ENCODE measurements at regions of chr12 and their contacts with region 1.

Region 1: GRCh38 chr12:56117778-56118687 is at the start of gene ZC3H10:
- DNase-seq: peak; percentile 89
- ATAC-seq: peak; percentile 76
- H3K4me3 Mint-ChIP-seq: peak within 1 kb of the TSS; percentile 100
- H3K27ac Mint-ChIP-seq: peak within 1 kb of the TSS; percentile 99
- H3K4me1 Mint-ChIP-seq: peaks cover 37% of the 10 kb centered on the region
- H3K27me3 Mint-ChIP-seq: no peaks in the 10 kb centered on the region
- CTCF ChIP-seq: no peak
- total RNA-seq, gene ZC3H10: 15.4 and 17.1 TPM in 2 replicates

Region 2: GRCh38 chr12:55738123-55739024 is 379.7 kb before region 1 on chr12:
- CTCF ChIA-PET with region 1: interaction called, 6 read pairs
- POLR2A ChIA-PET with region 1: interaction called, 7 read pairs
- intact Hi-C with region 1: loop called (anchors 1 kb)
- DNase-seq: peak; percentile 65
- ATAC-seq: peak; percentile 87
- H3K4me3 Mint-ChIP-seq: peak overlapping the region; percentile 92
- H3K27ac Mint-ChIP-seq: peak overlapping the region; percentile 91
- H3K4me1 Mint-ChIP-seq: peaks cover 27% of the 10 kb centered on the region
- H3K27me3 Mint-ChIP-seq: no peaks in the 10 kb centered on the region
- CTCF ChIP-seq: peak; percentile 73

Region 3: DNA sequence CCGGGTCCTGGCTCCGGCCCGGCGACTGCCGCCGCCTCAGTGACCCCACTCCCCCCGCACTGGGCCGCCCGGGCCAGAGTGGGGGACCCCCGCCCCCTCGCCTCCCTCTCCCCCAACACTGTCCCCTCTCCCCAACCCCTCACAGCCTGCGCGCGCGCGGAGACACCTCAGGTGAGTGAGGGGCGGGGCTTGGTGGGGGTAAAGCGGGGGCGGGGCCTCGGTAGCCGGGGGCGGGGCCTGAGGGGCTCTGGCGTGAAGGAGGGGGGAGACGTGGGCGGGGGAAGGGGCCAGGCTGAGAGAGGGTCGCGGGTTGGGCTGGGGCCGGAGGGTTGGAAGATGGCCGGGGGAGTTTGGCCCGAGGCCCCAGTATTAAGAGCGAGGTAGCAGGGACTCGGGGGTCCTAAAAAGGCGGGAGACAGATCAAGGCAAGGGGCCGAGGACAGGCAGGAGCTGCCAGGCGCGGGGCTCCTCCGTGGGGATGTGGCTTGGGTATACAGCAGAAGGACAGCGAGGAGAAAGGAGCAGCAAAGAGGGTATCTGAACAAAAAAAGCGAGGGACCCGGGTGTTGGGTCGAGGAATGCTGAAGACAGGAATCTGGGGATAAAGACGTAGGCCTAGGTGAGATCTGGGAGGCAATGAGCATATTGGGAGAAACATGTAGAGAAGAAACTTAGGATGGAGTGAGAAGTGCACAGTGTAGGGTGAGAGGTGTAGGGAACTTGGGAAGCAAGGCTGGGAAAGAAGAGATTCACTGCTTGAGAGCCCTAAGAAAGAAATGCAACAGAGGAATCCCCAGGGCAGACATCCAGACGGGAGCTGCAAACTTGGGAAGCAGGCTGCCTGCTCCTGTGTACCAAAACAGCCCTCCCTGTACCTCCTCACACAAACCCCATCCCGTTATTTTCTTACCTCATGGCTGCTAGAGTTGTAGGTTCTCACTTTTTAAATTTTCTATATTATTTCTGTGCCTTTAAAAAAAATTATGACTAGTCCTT is 110.2 kb before region 1 on chr12:
- CTCF ChIA-PET with region 1: no interaction called
- POLR2A ChIA-PET with region 1: interaction called, 4 read pairs
- intact Hi-C with region 1: loop called (anchors 1 kb)
- DNase-seq: peak; percentile 71
- ATAC-seq: peak; percentile 92
- H3K4me3 Mint-ChIP-seq: peak overlapping the region; percentile 88
- H3K27ac Mint-ChIP-seq: peak overlapping the region; percentile 79
- H3K4me1 Mint-ChIP-seq: peaks cover 9% of the 10 kb centered on the region
- H3K27me3 Mint-ChIP-seq: no peaks in the 10 kb centered on the region
- CTCF ChIP-seq: no peak

Region 4: DNA sequence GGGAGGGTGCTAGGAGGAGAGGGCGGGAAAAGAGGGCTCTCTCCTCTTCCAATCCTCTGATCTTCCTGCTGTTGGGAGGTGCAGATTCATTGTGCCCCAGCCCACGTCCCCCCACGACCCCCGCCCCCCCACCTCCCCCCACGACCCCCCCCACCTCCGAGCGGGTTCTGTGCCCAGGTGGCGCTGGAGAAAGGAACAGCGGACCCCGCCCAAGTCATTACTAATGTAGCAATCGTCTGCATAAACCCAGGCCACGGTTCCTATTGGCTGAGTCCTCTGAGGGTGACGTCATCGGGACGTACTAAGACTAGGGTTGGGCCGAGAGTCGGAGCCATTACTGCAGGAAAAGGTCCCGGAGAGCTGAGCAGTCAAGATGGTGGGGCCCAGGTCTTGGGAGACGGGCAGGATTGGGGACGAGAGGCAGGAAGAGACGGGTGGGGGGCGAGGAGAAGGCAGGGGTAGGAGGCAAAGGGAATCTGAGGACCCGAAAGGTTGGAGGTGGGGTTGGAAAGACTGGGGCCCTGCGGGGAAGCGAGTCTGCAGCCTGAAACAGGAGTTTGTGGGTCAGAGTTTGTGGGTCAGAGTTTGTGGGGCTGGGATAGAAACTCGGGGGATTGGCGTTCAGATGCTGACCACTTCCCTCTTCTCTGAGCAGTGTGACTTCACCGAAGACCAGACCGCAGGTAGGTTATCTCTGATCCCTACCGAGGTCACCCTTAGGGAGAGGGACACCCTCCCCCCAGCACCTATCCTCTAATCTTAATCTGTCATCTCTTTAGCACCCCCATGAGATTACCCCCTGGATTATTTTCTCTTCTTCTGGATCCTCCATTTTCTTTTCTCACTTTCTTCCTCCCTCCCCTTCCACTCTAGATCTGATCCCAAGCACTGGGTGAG is 40.2 kb after region 1 on chr12 and contains the start of gene MYL6:
- CTCF ChIA-PET with region 1: interaction called, 5 read pairs
- POLR2A ChIA-PET with region 1: interaction called, 15 read pairs
- intact Hi-C with region 1: loop called (anchors 1 kb)
- DNase-seq: peak; percentile 70
- ATAC-seq: peak; percentile 86
- H3K4me3 Mint-ChIP-seq: peak within 1 kb of the TSS; percentile 94
- H3K27ac Mint-ChIP-seq: peak within 1 kb of the TSS; percentile 95
- H3K4me1 Mint-ChIP-seq: peaks cover 48% of the 10 kb centered on the region
- H3K27me3 Mint-ChIP-seq: no peaks in the 10 kb centered on the region
- CTCF ChIP-seq: no peak
- total RNA-seq, gene MYL6: 921 and 1,059 TPM in 2 replicates

Region 5: GRCh38 chr12:56266693-56267442 is 148.8 kb after region 1 on chr12 and contains the start of gene COQ10A:
- CTCF ChIA-PET with region 1: no interaction called
- POLR2A ChIA-PET with region 1: interaction called, 6 read pairs
- intact Hi-C with region 1: loop called (anchors 2 kb)
- DNase-seq: peak; percentile 90
- ATAC-seq: peak; percentile 90
- H3K4me3 Mint-ChIP-seq: peak within 1 kb of the TSS; percentile 93
- H3K27ac Mint-ChIP-seq: peak within 1 kb of the TSS; percentile 93
- H3K4me1 Mint-ChIP-seq: peaks cover 18% of the 10 kb centered on the region
- H3K27me3 Mint-ChIP-seq: no peaks in the 10 kb centered on the region
- CTCF ChIP-seq: no peak
- total RNA-seq, gene COQ10A: 30.2 and 35.6 TPM in 2 replicates

Region 6: DNA sequence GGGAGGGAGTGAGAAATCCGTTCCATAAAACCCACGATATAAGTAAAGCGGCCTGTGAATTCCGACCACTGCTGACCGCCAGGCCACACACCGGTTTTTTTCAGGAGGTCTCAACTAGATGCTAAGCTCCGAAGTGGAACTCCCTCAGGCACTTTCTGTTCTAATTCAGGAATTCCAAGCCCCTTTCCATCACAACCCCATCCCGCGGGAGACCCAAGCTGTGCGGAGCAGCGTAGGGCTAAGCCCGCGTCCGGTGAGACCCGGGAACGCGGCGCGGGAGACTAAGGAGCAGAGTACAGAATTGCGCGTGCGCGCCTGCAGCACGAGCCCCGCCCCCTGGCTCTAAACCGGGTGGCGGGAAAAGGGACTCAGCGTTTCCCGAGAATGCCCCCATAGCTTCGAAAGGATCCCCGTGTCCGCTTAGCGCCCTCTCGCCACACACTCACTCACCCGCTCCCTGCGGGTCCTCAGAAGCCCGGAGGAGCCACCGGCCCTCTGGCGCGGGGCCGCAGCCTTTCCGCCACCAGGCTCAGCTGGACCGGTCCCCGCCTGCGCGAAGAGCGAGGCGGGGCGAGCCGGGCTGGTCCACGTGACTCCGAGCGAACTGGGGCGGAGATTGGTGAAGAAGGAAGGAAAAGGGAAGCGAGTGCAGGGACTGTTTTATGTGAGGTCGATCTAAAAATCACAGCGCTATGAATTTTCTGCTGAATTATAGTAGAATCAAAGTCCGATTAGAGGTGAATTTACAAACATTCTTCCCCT is 331.0 kb after region 1 on chr12 and contains the start of gene TIMELESS:
- CTCF ChIA-PET with region 1: no interaction called
- POLR2A ChIA-PET with region 1: interaction called, 10 read pairs
- intact Hi-C with region 1: loop called (anchors 5 kb)
- DNase-seq: peak; percentile 85
- ATAC-seq: peak; percentile 96
- H3K4me3 Mint-ChIP-seq: peak within 1 kb of the TSS; percentile 94
- H3K27ac Mint-ChIP-seq: peak within 1 kb of the TSS; percentile 97
- H3K4me1 Mint-ChIP-seq: peaks cover 22% of the 10 kb centered on the region
- H3K27me3 Mint-ChIP-seq: no peaks in the 10 kb centered on the region
- CTCF ChIP-seq: no peak
- total RNA-seq, gene TIMELESS: 31.8 and 35.0 TPM in 2 replicates

Region 7: DNA sequence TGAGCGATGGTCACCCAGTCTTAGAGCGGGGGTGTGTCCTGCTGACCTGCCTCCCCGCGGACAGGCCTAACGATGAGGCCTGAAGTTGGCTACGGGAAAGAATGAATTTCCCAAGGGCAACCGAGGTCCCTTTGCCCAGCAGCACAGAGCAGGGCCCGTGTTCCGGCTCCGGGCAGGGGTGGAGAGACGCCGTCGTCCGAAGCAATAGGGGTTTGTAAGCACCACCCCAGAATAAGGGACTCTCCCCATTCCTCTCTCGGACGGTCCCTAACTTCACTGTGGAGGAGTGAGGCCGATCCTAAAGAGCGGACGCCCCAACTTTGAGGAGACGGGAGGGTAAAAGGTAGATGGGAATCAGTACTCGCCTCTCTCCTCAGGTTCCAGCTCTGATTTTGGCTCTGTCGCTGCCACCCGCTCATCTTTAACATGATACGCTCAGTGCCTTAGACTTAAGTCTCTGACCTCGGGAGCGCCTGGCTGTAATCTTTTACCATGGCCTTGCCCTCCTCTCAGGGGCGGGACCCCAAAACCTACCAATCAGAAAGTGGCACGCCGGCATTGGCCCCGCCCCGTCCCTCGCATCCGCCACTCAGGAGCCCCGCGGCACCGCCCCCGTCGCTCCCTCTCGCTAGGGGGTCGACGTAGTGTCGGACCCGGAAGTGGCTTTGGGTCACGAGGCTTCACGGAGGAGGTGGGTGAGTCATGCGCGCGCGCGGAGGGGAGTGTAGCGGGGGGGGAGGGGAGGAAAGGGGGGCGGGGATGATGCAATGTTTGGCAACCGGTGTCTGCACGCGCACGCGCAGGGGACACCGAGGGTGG is 1402.2 kb after region 1 on chr12 and contains the start of gene DDIT3:
- CTCF ChIA-PET with region 1: no interaction called
- POLR2A ChIA-PET with region 1: no interaction called
- intact Hi-C with region 1: loop called (anchors 5 kb)
- DNase-seq: peak; percentile 99
- ATAC-seq: peak; percentile 73
- H3K4me3 Mint-ChIP-seq: peak within 1 kb of the TSS; percentile 98
- H3K27ac Mint-ChIP-seq: peak within 1 kb of the TSS; percentile 99
- H3K4me1 Mint-ChIP-seq: peaks cover 59% of the 10 kb centered on the region
- H3K27me3 Mint-ChIP-seq: no peaks in the 10 kb centered on the region
- CTCF ChIP-seq: no peak
- total RNA-seq, gene DDIT3: 30.5 and 34.3 TPM in 2 replicates